HepG2 (cell line): ENCODE measurements at regions of chr12 and their contacts with region 1.

Region 1: DNA sequence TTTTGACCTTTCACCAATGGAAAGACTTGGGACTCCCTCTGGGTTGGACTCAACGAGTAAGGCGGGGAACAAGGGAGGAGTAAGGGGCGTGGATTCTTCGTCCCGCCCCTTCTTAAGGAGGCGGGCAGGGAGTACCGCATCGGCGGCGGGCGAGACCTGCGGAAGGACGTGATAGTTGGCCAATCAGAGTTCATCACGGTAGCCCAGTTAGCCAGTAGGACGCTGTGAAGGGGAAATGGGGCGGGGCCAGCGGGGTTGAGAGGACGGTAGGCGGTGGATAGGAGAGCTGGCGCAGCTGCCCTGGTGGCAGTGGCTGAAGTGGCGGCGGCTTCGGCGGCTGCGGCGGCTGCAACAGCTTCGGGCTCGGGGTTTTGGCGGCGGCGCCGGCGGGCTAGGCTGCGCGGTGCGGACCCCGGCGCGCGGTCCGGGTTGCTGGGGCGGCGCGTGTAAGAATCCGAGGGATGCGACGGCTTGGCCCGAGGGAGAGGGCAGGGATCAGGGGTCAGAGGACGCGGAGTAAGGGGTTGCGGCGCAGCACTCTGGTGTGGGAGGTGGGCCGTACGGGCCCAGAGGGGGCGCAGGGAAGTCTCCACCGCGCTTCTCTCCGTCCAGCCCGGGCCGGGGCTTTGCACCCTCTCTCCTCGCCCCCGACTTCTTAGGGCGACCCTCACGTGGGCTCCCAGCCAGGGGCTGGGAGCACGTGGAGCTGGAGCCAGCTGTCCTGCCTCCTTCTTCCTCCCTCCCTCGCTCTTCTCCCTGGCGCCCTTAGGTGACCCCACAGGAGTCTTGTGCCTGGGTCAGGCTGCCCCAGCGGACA is at the start of gene TPCN1:
- DNase-seq: peak; percentile 100
- ATAC-seq: peak; percentile 93
- H3K4me3 ChIP-seq: peak within 1 kb of the TSS; percentile 67 to 90 (median 89)
- H3K27ac ChIP-seq: peak within 1 kb of the TSS; percentile 83
- H3K4me1 ChIP-seq: peaks cover 45% of the 10 kb centered on the region
- H3K27me3 ChIP-seq: no peaks in the 10 kb centered on the region
- CTCF ChIP-seq: peak; percentile 23; the same call in 1 of the 2 replicates
- EP300 ChIP-seq: no peak
- POLR2A ChIP-seq: peak; percentile 92 to 99
- RAD21 ChIP-seq: peak; percentile 69
- total RNA-seq, gene TPCN1: 3.8 and 8.0 TPM in 2 replicates

Region 2: GRCh38 chr12:112891093-112892024 is 330.0 kb before region 1 on chr12:
- CTCF ChIA-PET with region 1: no interaction called
- POLR2A ChIA-PET with region 1: no interaction called
- in situ Hi-C with region 1: no loop called
- intact Hi-C with region 1: no loop called
- DNase-seq: no peak
- ATAC-seq: peak; percentile 41; the same call in 1 of the 3 replicates
- H3K4me3 ChIP-seq: no peak overlapping the region
- H3K27ac ChIP-seq: no peak overlapping the region
- H3K4me1 ChIP-seq: no peaks in the 10 kb centered on the region
- H3K27me3 ChIP-seq: peaks cover 2 to 18% of the 10 kb centered on the region in 2 experiments; a peak in 3 of 5 replicates
- CTCF ChIP-seq: no peak
- EP300 ChIP-seq: no peak
- POLR2A ChIP-seq: no peak
- RAD21 ChIP-seq: no peak

Region 3: DNA sequence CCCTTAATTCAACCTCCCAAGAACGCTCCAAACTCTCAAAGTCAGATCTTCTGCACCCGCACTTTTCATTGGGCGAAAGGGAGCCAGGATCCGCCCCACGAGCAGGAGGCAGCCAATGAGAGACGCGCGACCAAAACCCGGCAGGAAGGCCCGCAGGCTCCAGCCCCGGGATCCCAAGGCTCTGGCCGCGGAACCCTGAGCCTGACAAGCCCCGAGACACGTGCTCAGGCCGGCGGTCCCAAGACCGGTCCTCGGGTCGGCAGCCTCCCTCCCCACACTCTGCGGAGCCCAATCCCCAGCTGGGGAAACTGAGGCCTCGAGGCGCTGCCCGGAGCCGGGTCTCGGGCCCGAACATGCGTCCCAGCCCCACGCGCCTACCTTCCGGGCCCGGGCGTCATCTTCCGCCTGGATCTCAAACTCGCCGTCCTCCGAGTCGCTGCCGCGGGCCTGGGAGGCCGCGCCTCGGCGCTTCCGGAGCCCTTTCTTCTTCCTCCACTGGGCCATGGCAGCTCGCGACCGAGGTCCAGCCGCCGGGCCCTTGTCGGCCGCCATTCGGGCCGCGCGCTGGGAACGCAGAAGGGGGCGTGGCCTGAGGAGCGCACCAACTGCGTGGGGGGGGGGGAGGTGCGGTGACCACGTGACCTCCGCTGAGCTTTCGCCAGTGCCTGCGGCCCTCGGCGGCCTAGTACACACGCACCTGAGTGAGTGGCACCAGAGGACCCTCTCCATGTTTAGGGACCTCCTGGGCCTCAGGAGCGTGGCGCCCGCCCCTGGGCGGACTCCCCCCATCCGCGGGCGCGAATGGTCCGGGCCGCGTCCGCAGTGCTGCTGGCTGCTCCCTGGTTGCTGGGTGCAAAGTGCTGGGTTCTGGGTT is 36.3 kb before region 1 on chr12 and contains the starts of genes DDX54 and RITA1:
- CTCF ChIA-PET with region 1: no interaction called
- POLR2A ChIA-PET with region 1: interaction called, 14 read pairs
- in situ Hi-C with region 1: no loop called
- intact Hi-C with region 1: loop called (anchors 1 kb)
- DNase-seq: peak; percentile 92
- ATAC-seq: peak; percentile 91
- H3K4me3 ChIP-seq: peak within 1 kb of the TSS; percentile 70 to 96 (median 86)
- H3K27ac ChIP-seq: peak within 1 kb of the TSS; percentile 93
- H3K4me1 ChIP-seq: peaks cover 34% of the 10 kb centered on the region
- H3K27me3 ChIP-seq: no peaks in the 10 kb centered on the region
- CTCF ChIP-seq: peak; percentile 19; the same call in 1 of the 2 replicates
- EP300 ChIP-seq: peak in 1 of 2 experiments; percentile 14; a peak in 1 of 4 replicates
- POLR2A ChIP-seq: peak; percentile 70 to 86; a peak in 3 of 4 replicates
- RAD21 ChIP-seq: no peak
- total RNA-seq, gene DDX54: 45.1 and 59.7 TPM in 2 replicates
- total RNA-seq, gene RITA1: 28.1 and 28.9 TPM in 2 replicates

Region 4: GRCh38 chr12:113232840-113233585 is 11.6 kb after region 1 on chr12:
- CTCF ChIA-PET with region 1: no interaction called
- POLR2A ChIA-PET with region 1: interaction called, 55 read pairs
- in situ Hi-C with region 1: no loop called
- intact Hi-C with region 1: no loop called
- DNase-seq: no peak
- ATAC-seq: no peak
- H3K4me3 ChIP-seq: no peak overlapping the region
- H3K27ac ChIP-seq: no peak overlapping the region
- H3K4me1 ChIP-seq: peaks cover 71% of the 10 kb centered on the region
- H3K27me3 ChIP-seq: no peaks in the 10 kb centered on the region
- CTCF ChIP-seq: no peak
- EP300 ChIP-seq: no peak
- POLR2A ChIP-seq: no peak
- RAD21 ChIP-seq: no peak

Region 5: DNA sequence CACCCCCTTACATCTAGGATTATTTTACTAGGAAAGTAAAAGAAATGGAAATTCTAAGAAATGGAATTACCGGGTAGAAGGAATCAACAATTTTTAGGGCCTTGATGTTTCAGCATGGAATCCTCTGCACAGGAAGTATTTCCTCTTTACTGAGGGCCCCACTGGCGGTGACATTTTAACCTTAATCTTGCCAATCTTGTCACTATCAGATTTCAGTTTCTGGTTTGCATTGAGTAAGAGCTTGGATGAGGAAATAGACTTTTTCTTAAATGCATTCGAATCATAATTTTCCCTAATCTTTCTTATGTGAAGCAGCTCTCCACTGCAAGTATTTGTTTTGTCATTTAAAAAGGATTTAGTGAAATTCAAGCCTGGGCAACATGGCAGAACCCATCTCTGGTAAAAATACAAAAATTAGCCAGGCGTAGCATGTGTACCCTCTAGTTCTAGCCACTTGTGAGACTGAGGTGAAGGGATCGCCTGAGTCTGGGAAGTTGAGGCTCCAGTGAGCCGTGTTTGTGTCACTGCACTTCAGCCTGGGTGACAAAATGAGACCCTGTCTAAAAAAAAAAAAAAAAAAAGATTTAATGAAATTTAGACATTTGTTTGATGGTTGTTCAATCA is 40.6 kb after region 1 on chr12:
- CTCF ChIA-PET with region 1: no interaction called
- POLR2A ChIA-PET with region 1: interaction called, 7 read pairs
- in situ Hi-C with region 1: no loop called
- intact Hi-C with region 1: loop called (anchors 2 kb)
- DNase-seq: no peak
- ATAC-seq: no peak
- H3K4me3 ChIP-seq: no peak overlapping the region
- H3K27ac ChIP-seq: no peak overlapping the region
- H3K4me1 ChIP-seq: peaks cover 33% of the 10 kb centered on the region
- H3K27me3 ChIP-seq: no peaks in the 10 kb centered on the region
- CTCF ChIP-seq: no peak
- EP300 ChIP-seq: no peak
- POLR2A ChIP-seq: no peak
- RAD21 ChIP-seq: no peak

Region 6: DNA sequence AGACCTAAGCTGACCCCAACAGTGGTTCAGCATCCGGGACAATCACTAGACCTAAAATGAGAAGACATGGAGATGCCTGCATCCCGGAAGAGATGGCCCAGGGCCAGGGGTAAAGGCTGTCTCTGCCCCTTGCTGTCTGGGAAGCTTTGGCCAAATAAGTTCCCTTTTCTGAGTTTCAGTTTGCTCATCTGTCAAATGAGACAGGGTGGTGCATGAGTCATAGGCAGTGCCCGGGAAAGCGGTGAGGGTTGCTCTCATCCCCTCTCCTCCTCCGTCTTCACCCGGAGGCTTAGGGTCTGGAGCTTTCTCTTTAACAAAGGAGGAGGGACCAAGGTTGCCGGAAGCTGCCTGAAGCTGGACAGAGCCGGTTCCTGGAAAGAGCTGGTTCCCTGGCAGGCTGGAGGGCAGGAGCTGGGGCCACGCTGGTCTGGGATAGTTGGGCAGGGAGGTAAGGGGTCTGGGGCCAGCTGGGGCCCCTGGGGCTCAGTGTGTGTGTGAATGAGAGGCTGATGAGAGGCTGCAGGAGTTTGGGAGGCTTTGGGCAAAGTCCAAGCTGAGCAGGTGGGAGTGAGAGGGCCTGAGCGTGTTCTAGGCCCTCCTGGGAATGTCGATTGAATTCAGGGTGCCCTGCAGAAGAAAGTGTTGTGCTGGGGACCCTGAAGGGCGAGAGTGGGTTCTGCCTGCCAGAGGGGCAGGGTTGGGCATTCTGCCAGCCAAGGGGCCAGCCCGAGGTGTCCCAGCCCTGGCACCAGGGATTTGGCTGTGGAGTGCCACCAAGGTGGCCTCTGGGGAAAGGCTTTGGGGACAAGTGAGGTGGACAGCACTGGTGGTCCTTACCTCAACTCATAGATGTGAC is 200.9 kb after region 1 on chr12 and contains the start of gene SDSL:
- CTCF ChIA-PET with region 1: no interaction called
- POLR2A ChIA-PET with region 1: interaction called, 4 read pairs
- in situ Hi-C with region 1: no loop called
- intact Hi-C with region 1: loop called (anchors 1 kb)
- DNase-seq: peak; percentile 48
- ATAC-seq: peak; percentile 70
- H3K4me3 ChIP-seq: peak within 1 kb of the TSS; percentile 64 to 77 (median 65)
- H3K27ac ChIP-seq: peak within 1 kb of the TSS; percentile 34
- H3K4me1 ChIP-seq: peaks cover 52% of the 10 kb centered on the region
- H3K27me3 ChIP-seq: no peaks in the 10 kb centered on the region
- CTCF ChIP-seq: no peak
- EP300 ChIP-seq: no peak
- POLR2A ChIP-seq: peak in 1 of 2 experiments; percentile 56; a peak in 2 of 4 replicates
- RAD21 ChIP-seq: no peak
- total RNA-seq, gene SDSL: 1.2 and 1.3 TPM in 2 replicates